RWPE1 (cell line): ENCODE measurements at regions of chr7 and their contacts with region 1.

Region 1: GRCh38 chr7:19747740-19748339 is 25.6 kb downstream of the TMEM196 start:
- DNase-seq: peak; percentile 36
- H3K27ac ChIP-seq: no peak overlapping the region
- CTCF ChIP-seq: peak; percentile 81

Region 2: DNA sequence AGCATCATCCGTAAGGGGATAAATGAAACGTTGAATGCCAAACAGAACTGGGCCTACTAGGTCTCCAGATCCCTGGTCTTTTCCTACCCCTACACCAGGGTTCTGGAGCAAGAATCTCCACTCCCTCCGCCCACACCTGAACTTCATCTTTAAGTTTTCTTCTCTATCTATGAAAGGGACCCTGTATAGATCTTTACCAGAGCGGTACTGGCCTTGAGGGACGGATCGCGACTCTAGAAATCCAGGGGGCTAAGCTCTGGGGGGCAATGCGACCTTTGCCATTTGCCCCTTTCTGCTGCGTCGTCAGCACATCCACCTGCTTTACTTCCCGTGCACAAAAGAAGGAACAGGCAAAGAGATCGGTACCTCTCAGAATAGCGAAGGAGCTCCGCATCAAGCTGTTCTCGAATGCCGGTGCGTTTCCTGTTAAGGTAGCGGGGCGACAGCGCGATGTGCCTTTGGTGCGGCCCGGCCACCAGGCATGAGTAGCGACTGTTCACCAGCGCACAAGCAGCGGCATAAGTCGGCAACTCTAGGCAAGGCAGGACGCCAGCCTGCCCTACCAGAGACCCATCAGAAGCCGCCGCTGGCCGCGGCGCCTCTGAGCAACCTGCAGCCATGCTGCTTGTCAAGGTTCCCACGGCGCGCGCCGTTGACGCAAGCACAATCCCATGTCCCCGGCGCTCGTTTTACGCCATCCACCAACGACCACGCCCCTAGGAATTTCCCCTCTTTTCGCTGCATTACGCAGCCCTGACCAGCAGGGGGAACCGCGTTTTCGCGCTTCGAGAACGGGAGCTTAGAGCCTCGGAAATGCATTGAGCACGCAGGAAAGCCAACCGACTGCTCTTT is 39.2 kb before region 1 on chr7 and contains the start of gene POLR1F:
- CTCF ChIA-PET with region 1: interaction called, 10 read pairs
- POLR2A ChIA-PET with region 1: no interaction called
- DNase-seq: peak; percentile 93
- H3K27ac ChIP-seq: peak within 1 kb of the TSS; percentile 63
- CTCF ChIP-seq: peak; percentile 96

Region 3: GRCh38 chr7:19713676-19714075 is 34.2 kb before region 1 on chr7:
- CTCF ChIA-PET with region 1: interaction called, 10 read pairs
- POLR2A ChIA-PET with region 1: no interaction called
- DNase-seq: peak; percentile 9
- H3K27ac ChIP-seq: no peak overlapping the region
- CTCF ChIP-seq: peak; percentile 79

Region 4: GRCh38 chr7:19958309-19958896 is 210.6 kb after region 1 on chr7:
- CTCF ChIA-PET with region 1: no interaction called
- POLR2A ChIA-PET with region 1: interaction called, 10 read pairs
- DNase-seq: peak; percentile 84
- H3K27ac ChIP-seq: peak overlapping the region; percentile 83
- CTCF ChIP-seq: no peak

Region 5: GRCh38 chr7:20598459-20599309 is 850.8 kb after region 1 on chr7:
- CTCF ChIA-PET with region 1: interaction called, 28 read pairs
- POLR2A ChIA-PET with region 1: no interaction called
- DNase-seq: peak; percentile 59
- H3K27ac ChIP-seq: no peak overlapping the region
- CTCF ChIP-seq: peak; percentile 83

Region 6: GRCh38 chr7:20651960-20652544 is 904.2 kb after region 1 on chr7:
- CTCF ChIA-PET with region 1: interaction called, 19 read pairs
- POLR2A ChIA-PET with region 1: no interaction called
- DNase-seq: peak; percentile 33
- H3K27ac ChIP-seq: no peak overlapping the region
- CTCF ChIP-seq: peak; percentile 74